Activated CD4-positive, alpha-beta memory T cell treated with anti-CD3 and anti-CD28 coated beads, Interleukin-2, amount 10 ng/mL, durations not matched to agents 7 days and 5 days (primary cell): ENCODE measurements at regions of chr6 and their contacts with region 1.

Region 1: DNA sequence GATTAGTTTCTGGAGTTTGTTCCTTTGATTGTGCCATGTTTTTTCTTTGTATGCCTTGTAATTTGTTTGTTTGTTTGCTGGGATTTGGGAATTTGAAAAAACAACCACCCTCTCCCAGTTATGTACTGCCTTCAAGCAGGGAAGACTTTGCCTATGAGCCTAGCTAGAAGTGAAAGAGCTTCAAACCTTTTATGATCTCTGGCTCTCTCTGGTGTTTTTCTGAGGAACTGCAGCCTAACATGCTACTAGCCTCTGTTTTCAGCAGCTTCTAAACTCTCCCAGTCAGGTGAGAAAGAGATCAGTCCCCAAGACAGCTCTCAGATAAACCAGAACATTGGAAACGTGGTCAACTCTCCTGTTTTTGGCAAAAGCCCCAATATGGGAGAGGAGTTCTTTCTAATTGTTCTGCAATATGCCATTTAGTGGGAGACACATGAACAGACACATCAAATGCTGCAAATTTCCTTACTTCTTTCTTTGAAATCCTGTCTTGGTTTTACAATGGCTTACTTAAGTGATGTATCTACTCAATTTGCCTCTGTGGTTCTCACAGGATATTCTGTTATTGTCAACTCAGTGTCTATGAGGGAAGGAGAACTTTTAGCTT is 58.9 kb upstream of the SERINC1 start:
- DNase-seq: peak; percentile 40
- H3K4me3 Mint-ChIP-seq: no peak overlapping the region
- H3K27ac Mint-ChIP-seq: no peak overlapping the region
- H3K4me1 Mint-ChIP-seq: no peaks in the 10 kb centered on the region
- H3K27me3 Mint-ChIP-seq: peaks cover 31% of the 10 kb centered on the region

Region 2: DNA sequence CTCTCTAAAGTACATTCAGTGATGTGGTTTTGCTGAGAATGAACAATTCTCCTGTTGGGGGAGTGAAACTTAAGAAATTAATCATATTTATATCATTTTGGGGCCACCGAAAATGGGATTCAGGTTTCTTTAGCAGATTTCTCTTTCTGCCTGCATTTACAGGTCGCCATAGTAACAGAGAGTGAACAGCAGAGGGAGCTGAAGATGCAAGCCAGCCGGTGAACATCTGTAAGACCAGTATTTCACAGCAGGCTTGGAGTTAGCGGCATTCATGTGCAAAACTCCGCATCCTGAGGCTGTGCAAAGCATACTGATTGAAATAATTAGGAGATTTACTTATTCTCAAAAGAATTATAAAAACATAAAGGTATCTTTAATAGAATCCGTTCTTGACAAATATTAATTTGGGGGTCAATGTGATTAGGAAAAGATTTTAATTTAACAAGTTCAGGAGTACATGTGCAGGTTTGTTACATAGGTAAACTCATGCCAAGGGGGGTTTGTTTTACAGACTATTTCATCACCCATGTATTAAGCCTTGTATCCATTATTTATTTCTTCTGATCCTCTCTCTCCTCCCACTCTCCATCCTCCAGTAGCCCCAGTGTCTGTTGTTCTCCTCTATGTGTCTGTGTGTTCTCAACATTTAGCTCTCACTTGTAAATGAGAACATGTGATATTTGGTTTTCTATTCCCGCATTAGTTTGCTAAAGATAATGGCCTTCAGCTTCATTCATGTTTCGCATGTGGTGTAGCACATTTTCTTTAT is 148.9 kb before region 1 on chr6:
- CTCF ChIA-PET with region 1: interaction called, 56 read pairs
- POLR2A ChIA-PET with region 1: no interaction called
- DNase-seq: peak; percentile 51
- H3K4me3 Mint-ChIP-seq: no peak overlapping the region
- H3K27ac Mint-ChIP-seq: no peak overlapping the region
- H3K4me1 Mint-ChIP-seq: no peaks in the 10 kb centered on the region
- H3K27me3 Mint-ChIP-seq: peaks cover 21% of the 10 kb centered on the region

Region 3: DNA sequence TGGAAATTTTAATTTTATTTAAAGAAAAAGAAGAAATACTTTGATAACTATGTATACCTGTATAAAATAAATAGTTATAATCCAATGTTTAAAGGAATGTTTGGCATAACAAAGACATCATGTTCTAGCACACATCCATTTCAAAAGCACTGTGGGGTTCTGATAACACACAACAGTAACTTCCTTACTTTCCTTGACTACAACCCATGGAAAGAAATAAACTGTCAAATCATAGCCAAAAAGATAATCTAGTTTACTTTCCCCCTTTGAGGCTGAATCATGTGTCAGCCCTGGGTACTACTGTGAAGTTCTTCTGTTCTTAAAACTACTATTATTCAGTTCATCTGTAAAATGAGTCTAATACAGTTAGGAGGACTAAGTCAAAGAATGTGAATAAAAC is 18.3 kb after region 1 on chr6:
- CTCF ChIA-PET with region 1: no interaction called
- POLR2A ChIA-PET with region 1: no interaction called
- DNase-seq: no peak
- H3K4me3 Mint-ChIP-seq: no peak overlapping the region
- H3K27ac Mint-ChIP-seq: no peak overlapping the region
- H3K4me1 Mint-ChIP-seq: no peaks in the 10 kb centered on the region
- H3K27me3 Mint-ChIP-seq: peaks cover 4% of the 10 kb centered on the region